ENCODE measurements at regions of chr2 and their contacts with region 1.

Region 1: DNA sequence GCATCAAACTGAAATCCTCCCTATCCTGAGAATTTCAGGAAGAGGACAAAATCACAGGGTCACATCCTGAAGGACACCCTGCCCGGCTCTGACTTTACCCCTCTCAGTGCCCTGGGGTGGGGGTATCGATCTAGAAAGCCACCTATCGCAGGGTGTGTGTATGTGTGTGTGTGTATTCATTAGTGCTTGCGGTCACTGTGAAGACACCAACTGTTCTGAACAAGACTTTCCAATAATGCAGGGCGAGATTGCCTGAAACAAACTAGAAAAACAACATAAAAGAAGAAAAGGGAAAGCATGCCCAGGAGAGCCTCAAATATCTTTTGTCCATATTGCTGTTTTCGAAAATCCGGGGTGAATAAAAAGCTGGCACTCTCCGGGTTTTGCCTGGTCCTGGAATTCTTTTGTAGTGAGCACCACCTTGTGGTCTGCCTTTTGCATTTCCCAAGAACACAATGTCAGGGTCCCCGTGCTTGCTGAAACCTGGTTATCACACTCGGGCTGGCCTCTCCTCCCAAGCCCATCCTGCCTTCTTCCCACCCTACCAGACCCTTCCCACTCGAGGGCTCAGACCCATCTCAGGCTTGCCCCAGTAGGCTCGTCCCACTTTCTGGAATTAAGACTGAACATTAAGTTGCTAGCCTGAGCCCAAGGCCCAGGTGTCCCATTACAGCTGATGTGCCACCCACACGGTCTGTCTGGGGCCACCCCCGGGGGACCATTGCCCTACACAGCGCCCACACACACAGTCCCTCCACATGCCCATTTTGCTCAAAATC is 25.0 kb upstream of the COPS8 start:
- DNase-seq: peak in 2 of 4 donors; percentile 65 to 81
- ATAC-seq: peak; percentile 90
- H3K4me3 ChIP-seq: no peak overlapping the region
- H3K27ac ChIP-seq: no peak overlapping the region
- H3K4me1 ChIP-seq: peaks cover 0 to 8% of the 10 kb centered on the region in 2 donors
- H3K27me3 ChIP-seq: no peaks in the 10 kb centered on the region
- CTCF ChIP-seq: peak; percentile 41 to 62

Region 2: DNA sequence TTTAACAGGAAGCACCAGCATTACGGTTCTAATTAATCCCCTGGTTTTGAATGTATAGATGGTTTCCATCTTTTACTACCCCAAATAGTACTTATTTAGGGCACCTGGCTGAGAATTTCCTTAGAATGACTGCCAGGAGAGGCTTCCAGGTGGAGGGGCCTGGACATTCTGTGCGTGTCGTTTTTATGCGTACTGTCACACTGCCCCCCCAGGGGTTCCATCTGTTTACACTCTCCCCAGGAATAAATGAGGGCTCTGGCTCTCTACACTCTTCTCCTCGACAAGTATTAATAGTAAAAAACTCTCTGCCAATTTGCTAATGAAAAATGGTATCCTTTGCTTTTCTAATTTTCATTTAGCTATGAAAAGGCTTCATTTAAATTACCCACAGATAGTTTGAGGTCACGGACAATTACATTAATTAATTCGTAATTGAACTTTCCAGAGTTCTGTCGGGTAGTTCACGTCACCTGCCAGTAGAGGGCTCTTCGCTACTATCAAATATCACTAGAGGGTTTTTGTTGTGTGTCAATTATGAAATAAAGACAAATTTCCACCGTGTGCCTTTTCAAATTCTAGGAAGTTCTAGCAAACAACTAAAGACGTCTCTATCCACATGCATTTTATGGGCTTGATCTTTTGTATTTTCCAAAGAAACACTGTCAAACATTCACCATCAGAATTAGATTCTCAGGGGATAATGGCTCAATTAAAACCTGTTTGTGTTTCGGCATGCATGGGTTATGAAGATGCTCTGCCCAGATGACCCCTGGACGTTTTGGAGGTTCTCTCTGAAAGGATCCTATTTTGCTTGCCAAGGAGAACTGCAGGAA is 707.7 kb before region 1 on chr2:
- intact Hi-C with region 1: loop called in 1 of 2 experiments (anchors 5 kb)
- DNase-seq: no peak
- ATAC-seq: peak; percentile 72
- H3K4me3 ChIP-seq: no peak overlapping the region
- H3K27ac ChIP-seq: no peak overlapping the region
- H3K4me1 ChIP-seq: no peaks in the 10 kb centered on the region
- H3K27me3 ChIP-seq: no peaks in the 10 kb centered on the region
- CTCF ChIP-seq: peak; percentile 71 to 73